Ascending aorta (tissue), 2 donors: ENCODE measurements at regions of chr1 and their contacts with region 1.

Region 1: DNA sequence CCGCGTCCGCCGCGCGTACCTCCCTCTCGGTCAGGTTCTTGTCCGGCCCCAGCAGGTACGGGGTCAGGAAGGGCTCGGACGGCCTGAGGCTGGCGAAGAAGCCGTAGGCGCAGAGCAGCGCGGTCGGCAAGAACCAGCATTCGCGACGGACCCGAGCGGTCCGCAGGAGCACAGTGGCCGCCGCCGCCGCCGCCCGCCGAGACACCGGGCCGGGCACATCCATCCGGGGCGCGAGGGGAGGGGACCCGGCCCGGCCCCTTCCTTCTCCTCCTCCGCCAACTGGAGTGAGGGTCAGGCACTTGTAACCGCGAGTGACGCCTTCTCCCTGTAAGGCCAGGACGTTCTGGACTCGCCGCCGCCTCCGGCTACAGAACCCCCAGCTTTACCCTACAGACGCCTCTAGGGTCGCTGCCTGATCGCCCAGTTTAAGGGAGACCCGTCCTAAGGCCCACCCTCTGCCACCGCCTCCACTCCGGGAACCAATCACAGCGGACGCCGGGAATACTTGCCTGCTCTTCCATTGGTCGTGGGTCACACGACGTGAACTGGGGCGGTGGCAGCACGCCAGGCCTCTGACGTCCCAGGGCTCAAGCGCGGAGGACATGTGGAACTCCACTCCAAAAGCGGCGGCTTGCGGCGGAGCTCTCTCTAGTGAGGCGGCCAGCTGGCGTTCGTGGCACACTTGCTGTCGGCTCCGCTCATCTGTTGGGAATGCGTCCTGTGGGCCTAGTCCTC is at the start of gene SLC19A2:
- DNase-seq: peak; percentile 98 to 100
- H3K4me3 ChIP-seq: peak within 1 kb of the TSS; percentile 80 to 98
- H3K27ac ChIP-seq: peak within 1 kb of the TSS; percentile 99 to 100
- H3K4me1 ChIP-seq: peaks cover 0 to 27% of the 10 kb centered on the region in 2 donors
- H3K27me3 ChIP-seq: no peaks in the 10 kb centered on the region
- CTCF ChIP-seq: peak in 2 of 3 experiments; percentile 32 to 39
- total RNA-seq, gene SLC19A2: 36.7 TPM

Region 2: DNA sequence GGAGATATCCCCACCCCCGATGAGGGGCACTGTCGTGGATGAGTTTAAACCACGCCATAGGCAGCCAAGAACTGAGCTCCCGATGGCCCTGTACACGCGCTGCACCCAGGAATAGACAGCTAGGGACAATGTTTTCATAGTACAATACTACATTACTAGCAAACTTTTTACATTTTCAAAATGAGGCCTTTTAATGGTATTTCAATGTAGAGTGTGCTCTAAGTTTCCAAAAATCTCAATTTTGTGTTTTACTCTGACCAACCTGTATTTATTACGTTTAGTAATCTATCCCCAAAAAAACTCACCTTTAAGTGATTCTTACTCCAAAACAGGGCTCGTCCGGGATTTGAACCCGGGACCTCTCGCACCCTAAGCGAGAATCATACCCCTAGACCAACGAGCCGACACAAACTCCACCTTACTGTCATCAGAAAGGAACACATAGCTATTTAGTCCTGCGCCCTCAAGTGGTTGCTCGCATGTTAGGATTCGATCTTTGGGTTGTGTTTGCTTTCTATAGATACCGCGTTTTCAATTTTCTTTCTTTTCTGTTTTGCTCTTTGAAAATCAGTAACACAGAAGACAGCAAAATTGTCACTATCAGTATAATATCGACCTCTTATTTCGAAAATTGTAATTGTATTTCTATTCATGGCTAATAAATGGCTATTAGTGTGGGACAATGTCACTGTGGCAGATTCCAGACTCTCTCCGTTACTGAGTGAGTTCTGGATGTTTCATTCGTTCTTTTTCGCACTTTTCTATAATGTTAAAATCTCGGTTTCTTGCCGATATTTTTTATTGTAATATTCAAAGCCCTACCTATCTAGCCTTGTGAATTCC is 1770.3 kb before region 1 on chr1:
- intact Hi-C with region 1: loop called (anchors 10 kb)
- DNase-seq: peak in 1 of 2 donors; percentile 95
- H3K4me3 ChIP-seq: peak overlapping the region; percentile 46 to 66
- H3K27ac ChIP-seq: peak overlapping the region; percentile 84 to 87
- H3K4me1 ChIP-seq: peaks cover 0 to 5% of the 10 kb centered on the region in 2 donors
- H3K27me3 ChIP-seq: no peaks in the 10 kb centered on the region
- CTCF ChIP-seq: peak; percentile 82 to 87 (median 82)

Region 3: DNA sequence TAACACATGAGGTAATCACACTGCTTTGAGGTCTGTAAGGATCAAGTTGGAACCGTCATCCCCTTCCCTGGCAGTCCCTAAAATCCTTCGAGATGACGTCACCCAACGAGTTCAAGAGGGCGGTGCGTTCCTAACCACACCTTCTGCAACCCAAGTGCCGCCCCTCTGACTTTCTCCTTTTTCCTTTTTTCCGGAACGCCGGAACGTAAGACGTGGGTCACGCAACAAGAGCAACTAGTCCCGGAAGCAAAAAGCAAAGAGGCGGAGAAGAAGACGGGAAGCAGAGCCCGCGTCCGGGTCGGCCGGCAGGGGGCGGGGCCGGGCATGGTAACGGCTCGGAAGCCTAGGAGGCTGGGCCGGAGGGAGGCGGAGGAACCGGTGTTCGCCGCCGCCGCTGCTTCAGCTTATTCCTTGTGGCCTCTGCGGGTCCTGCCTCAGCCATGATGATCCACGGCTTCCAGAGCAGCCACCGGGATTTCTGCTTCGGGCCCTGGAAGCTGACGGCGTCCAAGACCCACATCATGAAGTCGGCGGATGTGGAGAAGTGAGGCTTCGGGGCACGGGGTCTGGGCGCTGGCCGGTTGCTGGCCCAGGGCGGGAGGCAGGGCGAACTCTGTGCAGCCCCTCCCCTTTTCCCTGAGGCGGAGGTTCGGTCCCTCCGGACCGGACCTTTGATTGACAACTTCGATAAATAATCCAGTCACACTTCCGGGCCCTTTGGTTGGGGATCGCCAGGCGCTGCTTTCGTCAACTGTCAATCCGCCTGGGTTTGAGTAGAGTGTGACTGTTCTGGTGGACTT is 1306.9 kb before region 1 on chr1 and contains the start of gene TIPRL:
- intact Hi-C with region 1: loop called (anchors 5 kb)
- DNase-seq: peak; percentile 89 to 99
- H3K4me3 ChIP-seq: peak within 1 kb of the TSS; percentile 66 to 89
- H3K27ac ChIP-seq: peak within 1 kb of the TSS; percentile 95 to 96
- H3K4me1 ChIP-seq: peaks cover 0 to 22% of the 10 kb centered on the region in 2 donors
- H3K27me3 ChIP-seq: no peaks in the 10 kb centered on the region
- CTCF ChIP-seq: peak; percentile 57 to 78 (median 62)
- total RNA-seq, gene TIPRL: 2.7 TPM

Region 4: GRCh38 chr1:169091480-169091941 is 394.2 kb before region 1 on chr1:
- intact Hi-C with region 1: no loop called
- DNase-seq: no peak
- H3K4me3 ChIP-seq: no peak overlapping the region
- H3K27ac ChIP-seq: no peak overlapping the region
- H3K4me1 ChIP-seq: no peaks in the 10 kb centered on the region
- H3K27me3 ChIP-seq: no peaks in the 10 kb centered on the region
- CTCF ChIP-seq: no peak

Region 5: GRCh38 chr1:169106095-169106920 is 379.4 kb before region 1 on chr1 and contains the start of gene ATP1B1:
- intact Hi-C with region 1: loop called (anchors 5 kb)
- DNase-seq: peak; percentile 54 to 92
- H3K4me3 ChIP-seq: peak within 1 kb of the TSS; percentile 60 to 96
- H3K27ac ChIP-seq: peak within 1 kb of the TSS; percentile 74 to 80
- H3K4me1 ChIP-seq: peaks cover 2 to 11% of the 10 kb centered on the region in 2 donors
- H3K27me3 ChIP-seq: no peaks in the 10 kb centered on the region
- CTCF ChIP-seq: peak; percentile 38 to 55 (median 54)
- total RNA-seq, gene ATP1B1: 3.5 TPM

Region 6: GRCh38 chr1:169511316-169512028 is 25.8 kb after region 1 on chr1:
- intact Hi-C with region 1: loop called (anchors 1 kb)
- DNase-seq: peak in 1 of 2 donors; percentile 73
- H3K4me3 ChIP-seq: no peak overlapping the region
- H3K27ac ChIP-seq: peak overlapping the region; percentile 64 to 72
- H3K4me1 ChIP-seq: peaks cover 0 to 23% of the 10 kb centered on the region in 2 donors
- H3K27me3 ChIP-seq: no peaks in the 10 kb centered on the region
- CTCF ChIP-seq: no peak

Region 7: GRCh38 chr1:169565335-169566271 is 79.9 kb after region 1 on chr1:
- intact Hi-C with region 1: no loop called
- DNase-seq: no peak
- H3K4me3 ChIP-seq: no peak overlapping the region
- H3K27ac ChIP-seq: no peak overlapping the region
- H3K4me1 ChIP-seq: no peaks in the 10 kb centered on the region
- H3K27me3 ChIP-seq: no peaks in the 10 kb centered on the region
- CTCF ChIP-seq: no peak

Region 8: DNA sequence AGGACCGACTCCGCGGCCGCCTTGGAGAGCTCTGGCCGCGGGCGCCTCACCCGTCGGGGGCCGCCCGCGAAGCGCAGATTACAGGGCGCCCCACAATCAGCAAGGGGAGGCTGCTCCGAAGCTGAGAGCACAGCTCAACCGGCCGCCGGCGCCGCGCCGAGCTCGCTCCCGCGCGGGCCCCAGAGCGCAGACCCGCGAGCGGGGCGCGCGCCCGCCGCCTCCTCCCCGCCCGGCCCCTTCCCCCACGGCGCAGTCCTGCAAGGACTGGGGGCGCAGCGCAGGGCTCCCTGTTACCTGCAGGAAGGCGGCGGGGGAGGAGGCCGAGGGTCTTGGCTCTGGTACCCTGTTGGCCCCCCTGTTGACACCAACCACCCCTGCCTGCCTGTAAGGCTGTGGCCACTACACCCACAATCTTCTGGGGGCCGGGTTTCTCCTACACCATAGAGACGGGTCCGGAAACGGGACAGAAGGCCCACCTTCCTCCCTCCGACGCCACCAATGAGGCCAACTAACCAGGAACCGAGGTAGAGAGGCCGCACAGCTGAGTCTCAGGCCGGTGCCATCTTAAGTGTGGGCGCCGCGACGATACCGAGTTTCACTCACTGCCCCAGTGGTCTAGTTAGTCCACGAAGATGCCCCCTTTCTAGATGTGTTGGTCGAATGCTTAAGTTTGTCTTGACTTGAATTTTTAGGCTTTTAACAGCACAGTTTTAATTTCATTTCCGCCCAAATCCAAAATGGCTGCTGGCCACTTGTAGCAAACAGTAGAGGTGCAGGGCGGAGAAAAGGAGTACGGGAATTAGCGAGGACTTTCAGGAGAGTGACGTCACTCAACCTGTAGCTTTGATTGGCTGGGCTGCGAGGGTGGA is 408.0 kb after region 1 on chr1 and contains the start of gene SCYL3:
- intact Hi-C with region 1: loop called (anchors 2 kb)
- DNase-seq: peak; percentile 91 to 97
- H3K4me3 ChIP-seq: peak within 1 kb of the TSS; percentile 90 to 97
- H3K27ac ChIP-seq: peak within 1 kb of the TSS; percentile 84 to 98
- H3K4me1 ChIP-seq: peaks cover 6 to 18% of the 10 kb centered on the region in 2 donors
- H3K27me3 ChIP-seq: no peaks in the 10 kb centered on the region
- CTCF ChIP-seq: no peak
- total RNA-seq, gene SCYL3: 0.96 TPM